ENCODE measurements at regions of chr17 and their contacts with region 1.

Region 1: DNA sequence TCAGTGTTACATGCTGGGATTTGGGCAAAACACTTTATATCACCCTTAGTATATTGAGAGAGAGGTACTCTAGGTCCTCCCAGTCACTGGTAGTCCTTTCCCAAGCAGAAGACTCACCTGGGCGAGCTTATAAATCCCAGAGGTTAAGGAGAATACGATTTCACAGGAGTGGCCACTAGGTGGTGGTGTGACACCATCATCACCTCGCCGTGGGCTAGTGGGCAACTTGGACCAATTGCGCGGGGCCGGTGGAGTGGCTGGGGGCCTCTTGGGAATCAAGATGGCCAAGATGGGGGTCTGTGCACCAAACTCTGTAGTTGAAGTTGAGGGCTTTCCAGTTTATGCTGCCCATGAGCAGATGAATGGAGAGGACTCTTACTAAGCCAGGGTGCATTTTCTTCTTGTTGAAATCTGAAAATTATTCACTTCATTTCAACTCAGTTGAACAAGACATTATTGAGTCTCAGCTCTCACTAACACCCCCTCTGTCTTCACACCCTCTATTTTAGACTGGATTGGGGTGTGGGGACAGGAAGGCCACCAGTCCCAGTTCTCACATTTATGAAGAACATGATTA is 38.2 kb upstream of the PIRT start:
- DNase-seq: peak; percentile 62
- H3K4me3 ChIP-seq: no peak overlapping the region
- H3K27ac ChIP-seq: no peak overlapping the region
- H3K4me1 ChIP-seq: no peaks in the 10 kb centered on the region
- H3K27me3 ChIP-seq: no peaks in the 10 kb centered on the region
- CTCF ChIP-seq: peak; percentile 44

Region 2: DNA sequence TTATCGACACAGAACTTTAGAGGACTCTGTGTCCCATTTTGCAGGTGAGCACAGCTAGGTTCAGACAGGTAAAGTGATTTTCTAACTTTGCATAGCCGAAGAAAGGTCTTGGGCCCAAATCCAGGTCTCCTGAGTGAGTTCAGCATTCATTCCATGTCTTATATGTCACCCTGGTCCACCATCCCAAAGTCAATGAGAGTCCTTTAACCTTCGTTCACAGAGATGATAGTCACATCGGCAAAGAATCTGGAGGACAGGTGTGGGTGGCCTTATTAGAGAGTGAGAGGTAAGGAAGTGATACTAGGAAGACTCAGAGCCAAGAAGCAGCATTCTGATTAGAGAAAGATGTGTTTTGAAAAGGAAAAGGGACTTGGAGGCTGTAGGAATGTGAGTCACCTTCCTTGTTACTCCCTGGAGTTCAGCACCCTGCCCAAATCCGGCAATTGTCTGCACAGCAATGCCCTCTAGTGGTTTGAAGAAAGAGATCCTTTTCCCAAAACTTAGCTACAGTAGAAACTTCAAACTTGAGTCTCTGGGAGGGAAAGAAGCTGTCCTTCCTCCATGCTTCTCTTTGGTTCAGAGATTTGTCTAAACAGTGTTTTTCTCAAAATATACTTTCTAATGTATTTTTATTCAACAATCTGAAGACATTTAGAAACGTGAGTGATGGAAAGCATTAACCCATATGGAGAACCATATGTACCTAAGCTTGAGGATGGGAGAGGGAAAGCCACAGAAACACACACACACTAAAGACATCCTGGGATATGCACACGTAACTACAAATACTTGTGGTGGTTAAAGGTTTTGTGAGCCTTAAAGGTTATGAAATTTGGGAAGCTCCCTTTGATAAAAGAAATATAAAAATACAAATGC is 268.5 kb after region 1 on chr17:
- intact Hi-C with region 1: loop called (anchors 2 kb)
- DNase-seq: peak; percentile 63
- H3K4me3 ChIP-seq: no peak overlapping the region
- H3K27ac ChIP-seq: no peak overlapping the region
- H3K4me1 ChIP-seq: no peaks in the 10 kb centered on the region
- H3K27me3 ChIP-seq: no peaks in the 10 kb centered on the region
- CTCF ChIP-seq: peak; percentile 68

Region 3: DNA sequence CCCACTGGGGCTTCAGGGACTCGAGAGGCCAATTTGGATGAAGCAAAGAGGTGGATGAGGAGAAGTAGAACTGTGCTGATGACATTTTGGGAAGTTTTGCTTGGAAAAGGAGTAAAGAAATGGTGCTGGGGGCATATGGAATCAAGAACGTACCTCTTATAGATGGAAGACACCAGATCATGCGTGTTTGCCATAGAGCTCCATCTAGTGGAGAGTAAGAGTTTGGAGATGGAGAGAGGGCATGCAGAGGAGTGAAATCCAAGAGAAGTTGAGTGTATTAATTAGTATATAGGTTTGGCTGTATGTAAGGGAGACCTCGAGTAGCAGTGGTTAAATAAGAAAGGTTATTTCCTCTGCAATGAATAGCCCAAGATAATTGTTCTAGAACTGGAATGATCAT is 420.9 kb after region 1 on chr17:
- intact Hi-C with region 1: loop called (anchors 5 kb)
- DNase-seq: no peak
- H3K4me3 ChIP-seq: no peak overlapping the region
- H3K27ac ChIP-seq: no peak overlapping the region
- H3K4me1 ChIP-seq: no peaks in the 10 kb centered on the region
- H3K27me3 ChIP-seq: no peaks in the 10 kb centered on the region
- CTCF ChIP-seq: peak; percentile 15

Region 4: GRCh38 chr17:11644261-11645212 is 768.5 kb after region 1 on chr17:
- intact Hi-C with region 1: loop called (anchors 5 kb)
- DNase-seq: peak; percentile 81
- H3K4me3 ChIP-seq: no peak overlapping the region
- H3K27ac ChIP-seq: no peak overlapping the region
- H3K4me1 ChIP-seq: peaks cover 3% of the 10 kb centered on the region
- H3K27me3 ChIP-seq: no peaks in the 10 kb centered on the region
- CTCF ChIP-seq: peak; percentile 68

Region 5: DNA sequence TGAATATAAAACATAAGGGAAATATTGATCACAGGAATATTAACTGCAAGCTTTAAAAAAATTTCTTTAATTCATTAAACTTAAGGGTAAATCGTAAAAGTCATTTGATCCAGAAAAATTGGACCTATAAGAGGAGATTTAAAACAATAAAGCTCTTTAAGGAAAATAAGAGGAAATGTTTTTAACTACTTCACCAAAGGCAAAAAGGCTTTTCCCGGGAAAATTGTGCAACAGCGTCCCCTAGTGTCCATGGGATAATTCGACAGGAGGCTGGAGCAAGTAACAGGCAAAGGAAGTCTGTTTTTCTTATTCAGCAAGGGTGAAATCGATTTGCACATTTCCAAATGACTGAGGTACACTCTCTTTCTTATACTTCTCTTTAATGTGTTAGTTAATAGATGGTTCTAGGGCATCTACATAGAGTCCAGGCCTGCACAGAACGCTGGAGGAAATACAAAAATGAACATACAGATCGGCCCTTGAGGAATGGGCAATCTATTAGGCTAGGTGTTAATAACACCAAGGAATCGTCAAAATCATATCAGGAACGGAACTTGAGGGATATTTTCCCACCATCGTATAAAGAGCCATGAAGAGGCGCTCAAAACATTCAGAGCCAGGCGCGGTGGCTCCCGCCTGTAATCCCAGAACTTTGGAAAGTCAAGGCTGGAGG is 1059.8 kb after region 1 on chr17:
- intact Hi-C with region 1: loop called (anchors 5 kb)
- DNase-seq: peak; percentile 72
- H3K4me3 ChIP-seq: no peak overlapping the region
- H3K27ac ChIP-seq: no peak overlapping the region
- H3K4me1 ChIP-seq: no peaks in the 10 kb centered on the region
- H3K27me3 ChIP-seq: no peaks in the 10 kb centered on the region
- CTCF ChIP-seq: peak; percentile 81

Measured in colonic mucosa (tissue), 4 donors.